HepG2 (cell line): ENCODE measurements at regions of chr2 and their contacts with region 1.

Region 1: DNA sequence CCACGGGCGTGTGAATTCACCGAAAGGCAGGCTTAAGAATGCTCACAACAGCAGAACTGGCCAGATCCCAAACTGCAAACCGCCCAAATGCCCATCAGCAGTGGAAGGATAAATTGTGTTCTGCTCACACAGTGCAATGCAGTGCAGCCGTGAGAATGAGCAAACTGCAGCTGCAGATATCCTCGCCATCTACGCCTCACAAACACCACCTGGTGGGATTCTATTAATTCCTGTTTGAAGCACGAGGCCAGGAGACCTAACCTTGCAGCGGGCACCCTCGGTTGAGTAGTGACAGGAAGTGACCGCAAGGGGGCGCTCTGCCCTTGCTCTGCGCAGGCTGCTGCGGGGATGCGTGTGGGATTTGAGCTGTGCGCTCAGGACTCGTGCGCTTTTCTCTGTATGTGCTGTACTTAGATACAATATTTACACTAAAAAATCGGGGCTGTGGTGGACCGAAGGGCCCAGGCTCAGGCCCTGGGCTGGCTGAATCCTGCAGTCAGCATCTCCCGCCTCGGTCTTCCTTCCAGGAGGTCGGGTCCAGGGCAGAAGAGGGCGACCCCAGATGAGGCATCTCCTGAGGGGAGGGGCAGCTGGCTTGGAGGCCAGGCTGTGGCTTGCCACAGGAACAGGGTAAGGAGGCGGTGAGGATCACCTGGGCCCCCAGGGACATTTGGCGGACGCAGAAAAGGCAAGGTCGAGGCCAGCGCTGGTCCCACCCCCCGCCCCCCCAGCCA is 19.8 kb upstream of the PDIA6 start:
- DNase-seq: peak; percentile 74
- ATAC-seq: peak; percentile 85
- H3K4me3 ChIP-seq: no peak overlapping the region
- H3K27ac ChIP-seq: no peak overlapping the region
- H3K4me1 ChIP-seq: no peaks in the 10 kb centered on the region
- H3K27me3 ChIP-seq: peaks cover 19 to 76% of the 10 kb centered on the region in 2 experiments
- CTCF ChIP-seq: peak; percentile 98
- EP300 ChIP-seq: no peak
- POLR2A ChIP-seq: no peak
- RAD21 ChIP-seq: peak; percentile 96

Region 2: DNA sequence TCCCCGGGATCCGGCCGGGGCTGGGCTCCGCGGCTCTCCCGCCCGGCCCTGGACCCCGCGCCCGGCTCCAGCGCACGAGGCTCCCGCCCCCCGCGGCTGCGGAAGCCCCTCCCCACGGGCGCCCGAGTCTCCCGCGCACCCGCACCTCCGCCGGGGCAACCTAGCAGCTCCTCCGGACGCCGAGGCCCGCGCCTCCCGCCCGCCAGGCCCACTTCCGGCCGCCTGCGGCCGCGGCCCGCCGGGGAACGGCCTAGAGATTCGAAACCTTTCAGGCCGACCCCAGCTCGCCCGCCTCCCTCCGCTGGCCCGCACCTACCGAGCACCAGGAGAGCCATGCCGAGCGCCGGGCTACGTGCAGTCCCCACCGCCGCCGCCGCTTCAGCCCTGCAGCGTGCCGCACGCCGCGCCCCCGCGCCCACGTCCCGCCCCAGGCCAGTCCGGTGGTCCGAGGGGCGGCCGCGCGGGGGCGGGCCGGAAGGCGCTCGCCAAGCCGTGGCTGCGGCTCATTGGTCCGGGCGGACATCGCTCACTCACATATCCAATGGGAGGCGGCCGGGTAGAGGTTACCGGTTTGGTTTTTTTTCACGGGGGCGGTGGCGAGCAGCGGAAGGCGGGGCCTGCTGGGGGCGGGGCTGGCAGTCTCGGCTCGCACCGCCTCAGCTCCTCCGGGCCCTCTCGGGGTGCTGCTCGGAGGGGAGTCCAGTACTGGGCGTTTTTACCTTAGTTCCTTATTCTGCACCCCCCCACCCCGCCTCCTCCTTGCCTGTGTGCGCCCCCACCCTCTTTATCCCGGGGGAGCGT is 19.8 kb before region 1 on chr2 and contains the start of gene PDIA6:
- CTCF ChIA-PET with region 1: no interaction called
- POLR2A ChIA-PET with region 1: no interaction called
- in situ Hi-C with region 1: no loop called
- intact Hi-C with region 1: no loop called
- DNase-seq: peak; percentile 94
- ATAC-seq: peak; percentile 94
- H3K4me3 ChIP-seq: peak within 1 kb of the TSS; percentile 63 to 87 (median 73)
- H3K27ac ChIP-seq: peak within 1 kb of the TSS; percentile 81
- H3K4me1 ChIP-seq: peaks cover 75% of the 10 kb centered on the region
- H3K27me3 ChIP-seq: peaks cover 0 to 16% of the 10 kb centered on the region in 2 experiments; a peak in 2 of 5 replicates
- CTCF ChIP-seq: no peak
- EP300 ChIP-seq: no peak
- POLR2A ChIP-seq: peak; percentile 48 to 90
- RAD21 ChIP-seq: peak; percentile 55; the same call in 1 of the 2 replicates
- total RNA-seq, gene PDIA6: 318 and 642 TPM in 2 replicates

Region 3: DNA sequence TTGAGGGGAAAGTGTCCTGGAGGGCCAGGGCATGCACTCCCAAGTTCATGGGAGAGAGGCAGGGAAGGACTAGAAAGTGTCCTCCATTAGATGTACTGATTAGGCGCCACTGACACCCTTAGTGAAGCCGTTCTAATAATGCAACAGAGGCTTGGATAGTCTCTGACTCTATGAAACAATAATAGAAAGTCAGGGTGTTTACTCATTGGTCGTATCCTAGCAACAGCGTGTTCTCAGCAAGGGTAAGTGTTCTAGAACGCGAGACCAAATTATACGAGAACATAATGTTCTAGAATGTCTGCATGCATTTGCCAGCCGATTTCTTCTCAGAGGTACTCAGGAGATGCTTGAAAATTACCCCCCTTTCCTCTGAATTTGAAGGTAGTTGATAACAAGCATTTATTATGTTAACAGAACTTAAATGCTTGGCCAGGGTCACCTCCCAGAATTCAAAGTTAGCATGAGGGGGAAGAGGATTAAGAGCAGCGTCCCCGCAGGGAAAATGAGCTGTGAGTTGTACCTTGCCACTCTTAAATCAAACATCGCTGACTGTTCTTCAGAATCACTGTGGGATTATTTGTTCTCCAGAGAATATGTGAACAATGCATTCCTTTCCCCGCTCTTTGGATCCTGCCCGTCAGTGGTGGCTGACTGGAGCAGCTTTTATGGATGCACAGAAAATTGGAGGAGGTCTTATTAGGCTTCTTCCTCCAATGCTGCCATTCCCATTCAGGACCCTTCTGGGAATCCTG is 13.9 kb after region 1 on chr2:
- CTCF ChIA-PET with region 1: no interaction called
- POLR2A ChIA-PET with region 1: no interaction called
- in situ Hi-C with region 1: no loop called
- intact Hi-C with region 1: no loop called
- DNase-seq: peak; percentile 71
- ATAC-seq: peak; percentile 89
- H3K4me3 ChIP-seq: no peak overlapping the region
- H3K27ac ChIP-seq: no peak overlapping the region
- H3K4me1 ChIP-seq: peaks cover 26% of the 10 kb centered on the region
- H3K27me3 ChIP-seq: peaks cover 0 to 7% of the 10 kb centered on the region in 2 experiments; a peak in 2 of 5 replicates
- CTCF ChIP-seq: no peak
- EP300 ChIP-seq: no peak
- POLR2A ChIP-seq: no peak
- RAD21 ChIP-seq: no peak

Region 4: GRCh38 chr2:10900216-10901109 is 68.1 kb after region 1 on chr2:
- CTCF ChIA-PET with region 1: interaction called, 32 read pairs
- POLR2A ChIA-PET with region 1: no interaction called
- in situ Hi-C with region 1: loop called (anchors 5 kb)
- intact Hi-C with region 1: loop called (anchors 1 kb)
- DNase-seq: peak; percentile 72
- ATAC-seq: peak; percentile 97
- H3K4me3 ChIP-seq: no peak overlapping the region
- H3K27ac ChIP-seq: no peak overlapping the region
- H3K4me1 ChIP-seq: peaks cover 6% of the 10 kb centered on the region; the same call in 1 of the 2 replicates
- H3K27me3 ChIP-seq: no peaks in the 10 kb centered on the region
- CTCF ChIP-seq: peak; percentile 64
- EP300 ChIP-seq: no peak
- POLR2A ChIP-seq: no peak
- RAD21 ChIP-seq: peak; percentile 50

Region 5: DNA sequence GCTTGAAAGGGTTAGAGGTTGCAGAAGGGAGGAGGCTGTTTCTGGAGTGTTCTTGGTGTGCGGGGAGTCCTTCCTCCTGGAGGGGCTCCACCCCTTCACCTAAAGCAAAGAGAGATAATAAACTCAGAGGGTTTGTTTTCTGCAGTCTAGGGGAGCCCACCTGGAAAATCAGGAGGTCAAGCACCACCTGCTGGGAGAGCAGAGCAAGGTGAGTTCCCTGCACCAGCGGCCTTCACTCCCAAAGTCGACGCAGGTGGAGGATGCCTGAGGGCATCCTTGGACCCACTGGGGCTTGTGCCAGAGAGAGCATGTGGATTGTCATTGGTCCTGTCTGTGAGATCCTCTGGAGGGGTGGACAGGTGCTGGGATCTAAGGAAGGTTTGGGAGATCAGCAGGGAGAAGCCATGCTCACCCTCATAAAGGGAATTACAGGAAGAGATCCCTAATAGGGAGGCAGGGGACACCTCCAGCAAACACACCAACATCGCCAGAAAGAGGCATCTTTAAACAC is 196.1 kb after region 1 on chr2:
- CTCF ChIA-PET with region 1: interaction called, 11 read pairs
- POLR2A ChIA-PET with region 1: no interaction called
- in situ Hi-C with region 1: loop called (anchors 5 kb)
- intact Hi-C with region 1: loop called (anchors 1 kb)
- DNase-seq: no peak
- ATAC-seq: peak; percentile 80
- H3K4me3 ChIP-seq: no peak overlapping the region
- H3K27ac ChIP-seq: no peak overlapping the region
- H3K4me1 ChIP-seq: no peaks in the 10 kb centered on the region
- H3K27me3 ChIP-seq: peaks cover 5 to 33% of the 10 kb centered on the region in 2 experiments; a peak in 4 of 5 replicates
- CTCF ChIP-seq: peak; percentile 60
- EP300 ChIP-seq: no peak
- POLR2A ChIP-seq: no peak
- RAD21 ChIP-seq: no peak

Region 6: DNA sequence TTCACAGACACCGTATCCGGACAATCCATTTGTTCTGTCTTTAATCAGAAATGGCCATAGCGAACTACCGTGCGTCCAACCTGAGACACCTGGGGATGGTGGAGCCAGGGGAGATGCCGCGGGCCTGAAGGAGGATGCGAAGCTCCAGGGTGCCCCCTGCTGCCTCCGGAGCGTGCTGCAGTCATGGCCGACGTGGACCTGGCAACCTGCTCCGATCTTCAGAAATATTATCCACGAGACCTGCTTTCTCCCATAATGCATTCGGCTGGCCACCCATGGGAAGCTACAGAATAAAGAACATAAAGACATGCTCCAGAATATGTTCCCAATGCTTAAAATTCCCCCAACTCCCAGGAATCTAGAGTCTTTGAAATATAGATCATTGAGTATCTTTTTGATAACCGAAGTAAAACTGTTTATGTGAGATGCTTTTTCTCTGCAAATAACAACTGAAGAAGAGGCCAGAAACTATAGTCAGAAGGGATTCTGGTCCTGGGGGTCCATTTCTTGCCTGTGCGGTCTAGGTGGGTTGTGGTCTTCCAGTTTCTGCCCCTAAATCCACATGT is 292.2 kb after region 1 on chr2:
- CTCF ChIA-PET with region 1: interaction called, 66 read pairs
- POLR2A ChIA-PET with region 1: interaction called, 3 read pairs
- in situ Hi-C with region 1: loop called (anchors 5 kb)
- intact Hi-C with region 1: loop called (anchors 1 kb)
- DNase-seq: peak; percentile 43
- ATAC-seq: peak; percentile 80
- H3K4me3 ChIP-seq: peak overlapping the region in 1 of 3 experiments; percentile 0; a peak in 1 of 6 replicates
- H3K27ac ChIP-seq: no peak overlapping the region
- H3K4me1 ChIP-seq: peaks cover 18% of the 10 kb centered on the region
- H3K27me3 ChIP-seq: peaks cover 20 to 67% of the 10 kb centered on the region in 2 experiments
- CTCF ChIP-seq: peak; percentile 96
- EP300 ChIP-seq: no peak
- POLR2A ChIP-seq: no peak
- RAD21 ChIP-seq: peak; percentile 90